ENCODE measurements at regions of chr1 and their contacts with region 1.

Region 1: GRCh38 chr1:2545759-2546514 is 10.2 kb upstream of the TNFRSF14 start:
- DNase-seq: peak; percentile 97
- CTCF ChIP-seq: no peak

Region 2: DNA sequence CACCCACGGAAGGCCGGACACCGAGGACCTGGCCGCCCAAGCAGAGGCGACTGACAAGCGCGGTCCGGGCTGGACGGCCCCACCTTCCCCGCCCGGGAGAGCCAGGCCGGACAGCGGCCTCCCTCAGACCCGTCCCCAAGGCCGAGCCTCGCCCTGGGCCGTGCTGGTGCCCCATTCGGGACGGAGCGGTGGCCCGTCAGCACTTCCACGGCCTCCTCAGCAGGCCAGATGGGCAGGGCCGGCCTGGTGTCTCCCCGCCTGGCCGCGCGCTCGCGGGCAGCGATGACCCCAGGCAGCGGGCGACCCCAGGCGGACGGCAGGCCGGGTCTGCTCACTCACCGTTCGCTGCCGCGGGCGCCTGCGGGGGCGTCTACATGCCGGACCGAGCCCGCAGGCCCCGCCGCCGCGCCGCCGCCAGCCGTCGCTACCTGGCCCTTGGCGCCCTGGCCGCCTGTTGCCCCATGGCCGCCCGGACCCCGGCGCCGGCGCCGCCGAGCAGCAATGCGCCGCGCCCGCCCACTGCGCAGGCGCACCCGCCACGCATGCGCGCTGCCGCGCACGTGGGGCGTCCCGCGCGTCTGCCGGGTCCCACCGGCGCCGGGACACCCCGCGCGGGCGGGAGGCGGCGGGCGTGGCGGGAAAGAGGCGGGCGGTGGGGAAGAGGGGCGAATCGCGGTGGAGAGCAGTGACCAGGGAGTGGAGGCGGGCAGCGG is 767.8 kb before region 1 on chr1 and contains the start of gene NADK:
- CTCF ChIA-PET with region 1: no interaction called
- POLR2A ChIA-PET with region 1: no interaction called
- DNase-seq: peak; percentile 89
- CTCF ChIP-seq: no peak

Region 3: GRCh38 chr1:2414083-2414958 is 131.6 kb before region 1 on chr1:
- CTCF ChIA-PET with region 1: interaction called, 18 read pairs
- POLR2A ChIA-PET with region 1: interaction called, 6 read pairs
- DNase-seq: peak; percentile 86
- CTCF ChIP-seq: peak; percentile 88

Region 4: GRCh38 chr1:2494323-2494693 is 51.6 kb before region 1 on chr1:
- CTCF ChIA-PET with region 1: no interaction called
- POLR2A ChIA-PET with region 1: no interaction called
- DNase-seq: no peak
- CTCF ChIP-seq: no peak

Region 5: GRCh38 chr1:2525920-2526823 is 19.8 kb before region 1 on chr1 and contains the start of gene PANK4:
- CTCF ChIA-PET with region 1: interaction called, 27 read pairs
- POLR2A ChIA-PET with region 1: interaction called, 6 read pairs
- DNase-seq: peak; percentile 92
- CTCF ChIP-seq: no peak

Region 6: DNA sequence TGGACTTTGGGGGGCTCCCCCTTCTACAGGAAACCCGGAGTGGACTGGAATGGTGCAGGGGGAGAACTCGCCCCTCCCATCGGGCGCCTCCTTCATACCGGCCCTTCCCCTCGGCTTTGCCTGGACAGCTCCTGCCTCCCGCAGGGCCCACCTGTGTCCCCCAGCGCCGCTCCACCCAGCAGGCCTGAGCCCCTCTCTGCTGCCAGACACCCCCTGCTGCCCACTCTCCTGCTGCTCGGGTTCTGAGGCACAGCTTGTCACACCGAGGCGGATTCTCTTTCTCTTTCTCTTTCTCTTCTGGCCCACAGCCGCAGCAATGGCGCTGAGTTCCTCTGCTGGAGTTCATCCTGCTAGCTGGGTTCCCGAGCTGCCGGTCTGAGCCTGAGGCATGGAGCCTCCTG is 10.3 kb after region 1 on chr1 and contains the start of gene TNFRSF14:
- CTCF ChIA-PET with region 1: interaction called, 9 read pairs
- POLR2A ChIA-PET with region 1: interaction called, 11 read pairs
- DNase-seq: peak; percentile 83
- CTCF ChIP-seq: no peak

Region 7: DNA sequence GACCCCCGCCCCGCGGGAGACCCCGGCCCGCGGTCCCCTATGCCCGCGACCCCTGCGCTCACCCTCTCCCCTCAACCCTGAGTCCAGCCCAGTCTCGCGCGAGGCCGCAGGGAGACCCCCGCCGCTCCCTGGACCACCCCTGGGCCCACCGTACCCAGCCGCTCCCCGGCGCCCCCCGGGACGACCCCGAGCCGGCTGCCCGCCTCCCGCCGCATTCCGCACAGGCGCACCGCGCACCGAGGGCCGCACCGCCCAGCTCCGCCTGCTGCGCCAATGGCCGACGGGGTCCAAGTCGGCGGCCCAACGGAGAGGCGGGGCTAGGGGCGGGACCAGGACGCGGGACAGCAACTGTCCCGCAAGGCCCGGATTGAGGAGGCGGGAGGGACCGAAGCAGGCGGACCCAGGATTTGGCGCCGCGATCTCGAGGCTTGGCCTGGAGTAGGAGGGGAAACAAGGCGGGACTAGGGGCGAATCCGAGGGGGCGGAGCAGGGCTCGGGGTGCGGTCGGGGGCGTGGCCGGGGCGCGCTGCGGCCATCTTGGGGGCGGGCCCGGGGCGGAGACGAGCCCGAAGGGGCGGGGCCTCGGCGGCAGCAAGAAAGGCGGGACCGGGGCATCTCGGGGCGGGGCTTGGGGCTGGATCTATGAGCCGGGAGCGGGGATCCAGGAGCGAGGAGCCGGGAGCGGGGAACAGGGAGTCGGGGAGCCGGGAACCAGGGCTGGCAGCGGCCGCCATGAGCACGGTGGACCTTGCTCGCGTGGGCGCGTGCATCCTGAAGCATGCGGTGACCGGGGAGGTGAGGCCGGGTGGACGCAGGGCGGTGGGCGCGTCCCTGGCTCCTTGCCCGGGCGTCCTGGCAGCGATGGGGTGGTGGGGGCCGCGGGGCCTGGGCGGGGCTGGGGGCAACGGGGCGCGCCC is 40.5 kb after region 1 on chr1 and contains the start of gene PRXL2B:
- CTCF ChIA-PET with region 1: interaction called, 15 read pairs
- POLR2A ChIA-PET with region 1: interaction called, 12 read pairs
- DNase-seq: peak; percentile 99
- CTCF ChIP-seq: no peak